ENCODE measurements at regions of chr7 and their contacts with region 1.

Region 1: DNA sequence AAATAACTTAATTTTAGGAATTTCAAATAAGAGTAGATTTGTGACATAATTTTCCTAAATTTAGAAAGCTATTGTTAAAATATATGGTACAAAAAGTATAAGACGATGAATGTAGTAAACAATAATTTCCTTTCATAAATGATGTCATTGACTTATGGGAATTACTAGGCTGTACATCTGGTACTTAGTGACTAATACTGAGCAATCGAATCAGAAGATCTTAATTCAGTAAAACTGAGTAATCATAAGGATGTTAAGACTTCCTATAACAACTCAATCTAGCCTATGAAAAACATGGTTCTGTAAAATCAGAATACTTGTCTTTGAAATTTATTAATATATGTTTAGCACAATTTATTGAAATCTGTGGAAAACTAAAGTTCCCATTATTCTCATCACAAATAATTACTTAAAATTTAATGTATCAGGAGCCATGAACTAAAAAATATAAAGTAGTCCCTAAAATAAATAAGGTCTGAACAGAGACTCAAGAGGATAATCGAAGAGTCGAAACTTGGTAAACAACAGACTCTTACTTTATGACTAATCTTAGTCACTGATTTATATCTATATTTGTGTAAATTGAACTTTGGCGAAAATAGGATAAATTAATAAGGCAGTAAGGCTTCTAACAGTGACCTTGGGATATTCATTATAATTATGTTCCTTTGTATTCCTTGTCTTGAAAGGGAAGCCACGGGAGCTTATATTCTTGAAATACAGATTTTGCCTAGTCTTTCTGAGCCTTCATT is 142.1 kb downstream of the HGF start:
- DNase-seq: no peak
- ATAC-seq: no peak
- H3K4me3 ChIP-seq: no peak overlapping the region
- H3K27ac ChIP-seq: no peak overlapping the region
- H3K4me1 ChIP-seq: no peaks in the 10 kb centered on the region
- H3K27me3 ChIP-seq: no peaks in the 10 kb centered on the region

Region 2: DNA sequence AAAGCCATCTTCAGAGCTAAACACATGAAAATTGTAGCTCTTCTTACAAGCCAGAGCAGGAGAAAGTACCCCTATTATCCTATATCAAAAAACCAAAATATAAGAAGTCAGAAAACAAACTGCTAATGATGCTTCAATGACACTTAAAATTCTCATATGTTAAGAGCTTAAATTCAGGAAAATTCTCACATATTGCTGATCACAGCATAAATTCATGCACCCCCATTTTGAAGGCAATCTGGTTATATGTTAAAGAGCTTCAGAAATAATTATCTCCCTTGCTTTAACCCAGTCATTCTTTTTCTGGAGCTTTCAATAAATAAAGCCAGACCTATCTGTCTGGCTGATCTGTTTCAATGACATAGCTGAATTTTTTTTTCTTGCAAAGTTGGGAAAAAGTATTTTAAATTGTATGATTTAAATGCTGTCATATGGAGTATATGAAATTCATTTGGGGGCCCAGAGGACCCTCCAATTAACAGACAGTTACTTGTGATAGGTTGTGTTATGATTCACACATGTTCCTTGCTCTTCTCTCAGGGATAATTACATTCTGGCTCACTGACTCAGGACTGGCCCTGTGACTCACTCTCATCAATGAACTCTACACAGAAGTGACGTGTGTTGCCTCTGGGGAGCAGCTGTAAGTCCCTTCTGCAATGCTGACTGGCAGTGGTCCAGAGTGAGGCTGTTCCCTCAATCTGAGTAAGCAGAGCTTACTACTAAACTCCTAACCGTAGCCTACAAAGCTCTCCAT is 57.0 kb after region 1 on chr7:
- intact Hi-C with region 1: loop called in 1 of 2 experiments (anchors 10 kb)
- DNase-seq: peak; percentile 96 to 98
- ATAC-seq: peak; percentile 92
- H3K4me3 ChIP-seq: no peak overlapping the region
- H3K27ac ChIP-seq: no peak overlapping the region
- H3K4me1 ChIP-seq: peaks cover 4 to 6% of the 10 kb centered on the region in 2 donors
- H3K27me3 ChIP-seq: no peaks in the 10 kb centered on the region

Region 3: GRCh38 chr7:81744389-81744788 is 116.7 kb after region 1 on chr7:
- intact Hi-C with region 1: no loop called
- DNase-seq: no peak
- ATAC-seq: no peak
- H3K4me3 ChIP-seq: no peak overlapping the region
- H3K27ac ChIP-seq: no peak overlapping the region
- H3K4me1 ChIP-seq: no peaks in the 10 kb centered on the region
- H3K27me3 ChIP-seq: no peaks in the 10 kb centered on the region

Region 4: GRCh38 chr7:81846398-81846797 is 218.7 kb after region 1 on chr7:
- intact Hi-C with region 1: no loop called
- DNase-seq: peak in 1 of 2 donors; percentile 41
- ATAC-seq: peak; percentile 50
- H3K4me3 ChIP-seq: no peak overlapping the region
- H3K27ac ChIP-seq: no peak overlapping the region
- H3K4me1 ChIP-seq: no peaks in the 10 kb centered on the region
- H3K27me3 ChIP-seq: no peaks in the 10 kb centered on the region